Heart left ventricle (tissue), 16 donors: ENCODE measurements at regions of chr1 and their contacts with region 1.

Region 1: GRCh38 chr1:235075188-235075926 is 53.3 kb downstream of the TOMM20 start:
- DNase-seq: peak; percentile 78 to 86 (median 86)
- ATAC-seq: peak; percentile 70 to 82 (median 72)
- H3K4me3 ChIP-seq: peak overlapping the region in 10 of 12 donors; percentile 1 to 33 (median 16)
- H3K27ac ChIP-seq: peak overlapping the region; percentile 91 to 99 (median 94)
- H3K4me1 ChIP-seq: peaks cover 9 to 82% (median 67%) of the 10 kb centered on the region in 12 donors
- H3K27me3 ChIP-seq: no peaks in the 10 kb centered on the region
- CTCF ChIP-seq: no peak
- POLR2A ChIP-seq: peak in 1 of 2 donors; percentile 41

Region 2: GRCh38 chr1:234135501-234135900 is 939.9 kb before region 1 on chr1:
- intact Hi-C with region 1: no loop called
- DNase-seq: no peak
- ATAC-seq: no peak
- H3K4me3 ChIP-seq: no peak overlapping the region
- H3K27ac ChIP-seq: no peak overlapping the region
- H3K4me1 ChIP-seq: no peaks in the 10 kb centered on the region
- H3K27me3 ChIP-seq: peaks cover 0 to 8% (median 0%) of the 10 kb centered on the region in 9 donors
- CTCF ChIP-seq: no peak
- POLR2A ChIP-seq: no peak

Region 3: DNA sequence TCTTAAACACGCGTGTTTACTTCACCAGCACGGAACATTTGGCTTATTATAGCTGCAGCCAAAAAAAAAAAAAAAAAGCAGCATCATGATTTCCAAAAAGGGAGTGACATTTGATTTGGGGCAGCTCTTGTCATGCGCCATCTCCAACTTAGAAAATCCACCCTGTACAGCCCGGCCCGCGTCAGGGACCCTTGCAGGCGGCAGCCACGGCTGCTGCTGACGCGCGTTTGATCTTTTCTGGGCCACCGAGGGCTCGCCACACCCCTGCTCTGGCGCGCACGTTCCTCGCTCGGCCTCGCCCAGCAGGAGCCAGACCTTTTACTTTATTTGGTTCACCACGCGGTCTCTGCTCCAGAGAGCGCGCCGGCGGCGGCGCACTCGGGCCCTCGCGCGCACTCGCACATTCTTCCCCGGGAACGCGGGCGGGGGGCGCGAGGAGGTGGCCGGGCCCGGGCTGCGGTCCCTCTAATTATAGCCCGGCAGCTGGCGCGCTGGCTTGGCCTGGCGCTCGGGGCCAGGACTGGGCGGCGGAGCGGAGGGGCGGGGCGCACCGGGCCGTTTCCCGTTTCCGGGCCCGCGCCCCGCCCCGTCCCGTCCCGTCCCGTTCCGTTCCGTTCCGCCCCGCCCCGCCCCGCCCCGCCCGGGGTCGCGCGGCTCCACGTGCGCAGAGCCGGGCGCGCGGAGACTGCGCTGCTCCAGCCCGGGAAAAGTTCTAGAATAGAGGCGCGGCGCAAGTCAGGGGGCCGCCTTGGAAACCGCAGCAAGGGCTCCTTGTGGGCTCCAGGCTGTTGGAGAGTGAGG is 475.5 kb before region 1 on chr1:
- intact Hi-C with region 1: loop called in 4 of 10 experiments (anchors 2 to 5 kb)
- DNase-seq: peak; percentile 91 to 96 (median 94)
- ATAC-seq: peak; percentile 77 to 95 (median 88)
- H3K4me3 ChIP-seq: peak overlapping the region in 11 of 12 donors; percentile 29 to 86 (median 51)
- H3K27ac ChIP-seq: peak overlapping the region; percentile 88 to 100 (median 99)
- H3K4me1 ChIP-seq: peaks cover 29 to 66% (median 50%) of the 10 kb centered on the region in 12 donors
- H3K27me3 ChIP-seq: no peaks in the 10 kb centered on the region
- CTCF ChIP-seq: peak in 1 of 12 donors; percentile 10
- POLR2A ChIP-seq: peak in 1 of 2 donors; percentile 74

Region 4: DNA sequence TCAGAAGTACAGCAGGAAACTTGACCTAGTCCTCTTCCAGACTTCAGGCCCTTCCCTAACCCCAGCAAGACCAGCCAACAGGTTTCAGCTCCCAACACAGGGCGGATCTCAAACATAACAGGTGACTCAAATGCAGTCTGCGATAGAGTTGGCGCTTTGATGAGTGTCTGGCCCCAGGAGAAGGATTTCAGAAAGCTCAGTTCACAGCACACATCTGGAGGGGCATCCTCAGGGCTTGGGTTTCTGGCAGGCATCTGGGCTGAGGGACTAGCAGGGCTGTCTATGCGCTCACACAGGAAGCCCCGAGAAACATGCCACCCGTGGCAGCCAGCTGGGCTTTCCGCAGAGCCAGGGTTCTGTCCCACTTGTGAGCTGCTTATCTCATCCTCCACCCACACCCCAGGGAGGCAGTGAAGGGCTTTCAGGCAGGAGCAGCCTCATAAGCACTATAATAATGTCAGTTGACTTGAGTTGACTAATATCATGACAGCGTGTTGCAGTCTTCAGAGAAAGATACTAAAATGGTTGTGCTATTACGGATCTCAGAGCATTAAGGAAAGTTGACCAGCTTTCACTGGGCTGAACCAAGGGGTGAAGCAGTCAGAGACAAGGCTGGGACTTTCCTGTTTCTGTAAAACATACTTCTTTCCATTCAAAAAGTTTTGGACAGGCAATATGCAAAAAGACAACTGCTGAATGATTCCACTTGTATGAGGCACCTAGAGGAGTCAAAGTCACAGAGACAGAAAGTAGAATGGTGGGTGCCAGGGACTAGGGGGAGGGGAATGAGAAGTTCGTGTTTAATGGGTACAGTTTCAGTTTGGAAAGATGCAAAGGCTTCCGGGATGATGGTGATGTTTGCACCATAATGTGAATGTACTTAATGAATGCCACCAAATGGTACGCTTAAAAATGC is 232.4 kb before region 1 on chr1:
- intact Hi-C with region 1: no loop called
- DNase-seq: peak in 2 of 5 donors; percentile 68 to 86
- ATAC-seq: peak; percentile 36 to 81 (median 66)
- H3K4me3 ChIP-seq: no peak overlapping the region
- H3K27ac ChIP-seq: peak overlapping the region in 8 of 12 donors; percentile 2 to 85 (median 46)
- H3K4me1 ChIP-seq: peaks cover 0 to 78% (median 27%) of the 10 kb centered on the region in 12 donors
- H3K27me3 ChIP-seq: no peaks in the 10 kb centered on the region
- CTCF ChIP-seq: no peak
- POLR2A ChIP-seq: no peak

Region 5: GRCh38 chr1:234887016-234887900 is 188.1 kb before region 1 on chr1:
- intact Hi-C with region 1: loop called in 5 of 10 experiments (anchors 5 to 10 kb)
- DNase-seq: peak in 4 of 5 donors; percentile 65 to 84 (median 74)
- ATAC-seq: peak; percentile 74 to 87 (median 78)
- H3K4me3 ChIP-seq: peak overlapping the region in 2 of 12 donors; percentile 1 to 6
- H3K27ac ChIP-seq: peak overlapping the region; percentile 85 to 97 (median 94)
- H3K4me1 ChIP-seq: peaks cover 0 to 43% (median 26%) of the 10 kb centered on the region in 12 donors
- H3K27me3 ChIP-seq: no peaks in the 10 kb centered on the region
- CTCF ChIP-seq: no peak
- POLR2A ChIP-seq: no peak

Region 6: DNA sequence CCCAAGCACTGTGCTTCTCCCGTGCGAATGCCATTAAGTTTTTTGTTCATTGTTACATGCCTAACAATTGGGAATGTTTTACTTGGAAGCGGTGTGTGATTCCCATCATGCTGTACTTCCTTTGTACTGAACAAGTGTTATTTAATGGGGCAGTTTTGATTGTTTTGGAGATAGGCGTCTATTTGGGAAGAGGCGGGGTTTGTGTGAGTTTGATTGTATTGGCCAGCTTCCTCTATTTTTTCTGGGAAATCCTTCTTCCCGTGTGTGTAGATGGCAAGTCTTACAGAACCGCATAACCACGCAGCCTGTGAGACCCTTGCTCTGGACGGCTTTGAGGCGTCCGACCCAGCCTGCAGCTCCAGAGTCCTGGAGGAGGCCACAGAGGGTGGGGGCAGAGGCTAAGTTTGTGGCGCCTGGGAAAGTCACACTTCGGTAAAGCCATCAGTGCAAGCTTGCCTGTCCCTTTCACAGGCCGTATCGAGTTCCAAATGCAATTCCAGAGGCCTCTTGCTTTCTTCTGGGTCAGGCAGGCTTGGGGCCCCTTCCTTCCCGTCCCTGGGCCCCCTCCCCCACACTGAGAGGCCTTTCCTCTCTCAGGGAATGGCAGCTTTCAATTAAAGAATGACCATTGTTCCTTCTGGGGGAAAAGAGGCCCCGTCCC is 157.0 kb before region 1 on chr1:
- intact Hi-C with region 1: loop called in 7 of 10 experiments (anchors 1 to 10 kb)
- DNase-seq: peak in 4 of 5 donors; percentile 55 to 72 (median 69)
- ATAC-seq: peak; percentile 30 to 68 (median 47)
- H3K4me3 ChIP-seq: no peak overlapping the region
- H3K27ac ChIP-seq: peak overlapping the region; percentile 81 to 93 (median 87)
- H3K4me1 ChIP-seq: peaks cover 21 to 82% (median 71%) of the 10 kb centered on the region in 12 donors
- H3K27me3 ChIP-seq: no peaks in the 10 kb centered on the region
- CTCF ChIP-seq: no peak
- POLR2A ChIP-seq: no peak

Region 7: DNA sequence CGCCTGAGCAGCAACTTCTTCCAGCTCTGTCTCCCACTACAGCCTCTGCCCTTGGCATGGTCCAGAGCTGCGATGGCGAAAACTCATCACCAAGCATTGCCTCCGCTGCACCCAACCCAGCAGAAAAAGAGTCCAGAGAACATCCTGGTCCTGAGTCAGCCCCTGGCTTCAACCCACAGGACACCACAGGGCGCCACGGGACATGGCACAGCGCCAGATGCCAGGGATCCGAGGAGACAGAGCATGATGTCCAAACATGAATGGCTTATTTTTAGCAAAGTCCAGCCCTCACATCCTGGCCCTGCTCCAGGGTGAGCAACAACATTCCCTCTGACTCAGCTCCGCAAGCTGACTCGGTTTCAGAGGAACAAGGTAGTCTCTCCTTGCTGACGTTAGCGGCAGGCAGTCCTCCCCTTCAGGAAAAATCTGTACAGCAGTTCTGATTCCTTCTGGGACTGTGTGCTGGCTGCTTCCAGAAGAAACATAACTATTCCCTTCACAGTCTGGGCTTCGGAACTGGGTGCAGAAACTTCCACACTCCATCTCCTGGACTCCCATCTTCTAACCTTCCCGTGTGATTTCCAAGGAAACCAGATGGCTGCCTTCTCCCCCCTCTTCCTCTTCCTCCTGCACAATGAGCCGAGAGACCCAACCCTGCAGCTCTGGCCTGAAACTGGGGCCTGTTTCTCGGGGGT is 78.0 kb before region 1 on chr1:
- intact Hi-C with region 1: loop called in 8 of 10 experiments (anchors 2 to 5 kb)
- DNase-seq: peak; percentile 95 to 100 (median 98)
- ATAC-seq: peak; percentile 94 to 96 (median 96)
- H3K4me3 ChIP-seq: peak overlapping the region in 7 of 12 donors; percentile 6 to 28 (median 18)
- H3K27ac ChIP-seq: peak overlapping the region; percentile 88 to 98 (median 93)
- H3K4me1 ChIP-seq: peaks cover 8 to 32% (median 26%) of the 10 kb centered on the region in 12 donors
- H3K27me3 ChIP-seq: no peaks in the 10 kb centered on the region
- CTCF ChIP-seq: peak in 1 of 12 donors; percentile 18
- POLR2A ChIP-seq: peak in 1 of 2 donors; percentile 62

Region 8: GRCh38 chr1:235018161-235018560 is 57.2 kb before region 1 on chr1:
- intact Hi-C with region 1: no loop called
- DNase-seq: peak in 1 of 5 donors; percentile 55
- ATAC-seq: peak in 1 of 4 donors; percentile 47
- H3K4me3 ChIP-seq: no peak overlapping the region
- H3K27ac ChIP-seq: no peak overlapping the region
- H3K4me1 ChIP-seq: peaks cover 0 to 37% (median 1%) of the 10 kb centered on the region in 12 donors
- H3K27me3 ChIP-seq: no peaks in the 10 kb centered on the region
- CTCF ChIP-seq: no peak
- POLR2A ChIP-seq: no peak

Region 9: GRCh38 chr1:235045034-235045720 is 30.2 kb before region 1 on chr1:
- intact Hi-C with region 1: loop called in 1 of 10 experiments (anchors 5 kb)
- DNase-seq: no peak
- ATAC-seq: no peak
- H3K4me3 ChIP-seq: no peak overlapping the region
- H3K27ac ChIP-seq: peak overlapping the region in 1 of 12 donors; percentile 89
- H3K4me1 ChIP-seq: peaks cover 5 to 50% (median 21%) of the 10 kb centered on the region in 12 donors
- H3K27me3 ChIP-seq: no peaks in the 10 kb centered on the region
- CTCF ChIP-seq: no peak
- POLR2A ChIP-seq: no peak

Region 10: DNA sequence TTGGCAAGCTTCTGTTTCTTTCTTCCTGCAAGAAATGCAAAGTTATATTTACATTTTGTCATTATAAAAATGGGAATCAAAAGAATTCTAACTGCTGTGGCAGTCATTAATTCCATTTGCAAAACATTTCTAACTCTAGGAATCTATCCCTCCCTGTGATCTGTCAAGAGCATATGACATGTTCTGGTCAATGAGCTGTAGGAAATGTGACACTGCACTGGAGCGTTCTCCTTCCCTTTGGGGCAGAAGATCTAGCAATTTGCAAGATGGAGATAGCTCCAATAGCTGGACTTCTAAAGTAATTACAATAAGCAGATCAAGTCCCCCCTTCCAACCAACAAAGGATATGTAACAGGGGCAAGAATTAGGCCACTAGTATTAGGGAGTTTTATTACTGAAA is 47.0 kb after region 1 on chr1:
- intact Hi-C with region 1: no loop called
- DNase-seq: no peak
- ATAC-seq: no peak
- H3K4me3 ChIP-seq: no peak overlapping the region
- H3K27ac ChIP-seq: no peak overlapping the region
- H3K4me1 ChIP-seq: peaks cover 0 to 40% (median 17%) of the 10 kb centered on the region in 12 donors
- H3K27me3 ChIP-seq: no peaks in the 10 kb centered on the region
- CTCF ChIP-seq: no peak
- POLR2A ChIP-seq: no peak